GM18951 (cell line): ENCODE measurements at regions of chr6 and their contacts with region 1.

Region 1: DNA sequence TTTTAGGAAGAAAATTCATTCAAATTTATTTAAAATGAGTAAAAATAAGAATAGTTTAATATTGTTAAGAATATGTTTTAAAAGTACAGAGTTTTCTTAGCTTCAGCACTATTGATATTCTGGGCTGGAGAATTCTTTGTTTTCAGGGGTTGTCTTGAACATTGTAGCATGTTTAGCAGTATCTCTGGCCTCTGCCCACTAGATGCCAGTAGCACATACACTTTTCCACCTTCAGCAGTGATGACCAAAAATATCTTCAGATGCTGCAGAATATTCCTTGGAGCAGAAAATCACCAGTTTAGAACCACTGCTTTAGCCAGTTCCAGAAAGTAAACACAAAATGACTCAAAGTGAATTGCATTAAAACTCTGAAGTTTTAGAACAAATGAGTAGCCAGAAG is 19.4 kb upstream of the SDHAF4 start:
- POLR2A ChIP-seq: no peak

Region 2: GRCh38 chr6:70686548-70687133 is 139.3 kb after region 1 on chr6:
- in situ Hi-C with region 1: loop called (anchors 25 kb)
- POLR2A ChIP-seq: no peak